ENCODE measurements at regions of chr20 and their contacts with region 1.

Region 1: GRCh38 chr20:44909872-44910689 is at the start of gene PABPC1L:
- DNase-seq: peak; percentile 79
- ATAC-seq: peak; percentile 84
- H3K4me3 ChIP-seq: peak within 1 kb of the TSS; percentile 79
- H3K27ac ChIP-seq: no peak within 1 kb of the TSS
- H3K4me1 ChIP-seq: peaks cover 6% of the 10 kb centered on the region; the same call in 1 of the 2 replicates
- H3K27me3 ChIP-seq: no peaks in the 10 kb centered on the region
- CTCF ChIP-seq: no peak
- total RNA-seq, gene PABPC1L: 32.0 and 40.7 TPM in 2 replicates

Region 2: DNA sequence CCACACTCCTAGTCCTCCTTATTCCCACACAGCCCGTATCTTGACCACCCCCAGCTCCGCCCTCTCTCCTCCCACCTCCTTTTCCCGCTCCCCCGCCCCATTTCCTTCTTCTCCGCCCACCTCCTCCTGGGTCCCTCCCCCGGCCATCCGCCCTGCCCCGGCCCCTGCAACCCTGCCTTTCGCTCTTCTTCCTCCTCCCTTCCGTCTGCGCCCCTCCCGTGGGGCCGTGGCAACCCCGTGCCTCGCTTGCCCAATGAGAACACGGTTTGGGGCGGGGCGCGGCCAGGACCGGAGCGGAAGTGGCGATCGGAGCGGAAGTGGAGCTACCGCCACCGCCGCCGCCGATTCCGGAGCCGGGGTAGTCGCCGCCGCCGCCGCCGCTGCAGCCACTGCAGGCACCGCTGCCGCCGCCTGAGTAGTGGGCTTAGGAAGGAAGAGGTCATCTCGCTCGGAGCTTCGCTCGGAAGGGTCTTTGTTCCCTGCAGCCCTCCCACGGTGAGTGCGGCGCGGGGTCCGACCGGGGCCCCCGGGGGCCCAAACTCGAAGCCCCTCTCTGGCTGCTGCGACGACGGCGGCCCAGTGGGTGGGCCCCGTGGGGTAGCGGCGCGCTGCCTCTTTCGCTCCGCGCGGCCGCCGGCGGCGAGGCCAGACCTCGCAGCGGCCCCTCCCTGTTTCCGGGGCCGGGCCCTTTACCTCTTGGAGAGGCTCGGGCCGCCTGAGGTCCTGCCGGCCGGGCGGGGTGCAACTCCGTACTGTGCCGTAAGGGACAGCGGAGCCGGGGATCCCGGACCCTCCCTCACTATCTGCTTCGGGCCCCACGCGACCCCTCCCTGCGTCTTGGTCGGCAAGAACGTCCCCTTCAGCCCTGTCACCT is 24.5 kb before region 1 on chr20 and contains the start of gene YWHAB:
- CTCF ChIA-PET with region 1: interaction called, 3 read pairs
- POLR2A ChIA-PET with region 1: interaction called, 5 read pairs
- intact Hi-C with region 1: loop called (anchors 1 kb)
- DNase-seq: peak; percentile 99
- ATAC-seq: peak; percentile 96
- H3K4me3 ChIP-seq: peak within 1 kb of the TSS; percentile 96
- H3K27ac ChIP-seq: peak within 1 kb of the TSS; percentile 77
- H3K4me1 ChIP-seq: peaks cover 33% of the 10 kb centered on the region
- H3K27me3 ChIP-seq: no peaks in the 10 kb centered on the region
- CTCF ChIP-seq: no peak
- total RNA-seq, gene YWHAB: 116 and 118 TPM in 2 replicates

Region 3: DNA sequence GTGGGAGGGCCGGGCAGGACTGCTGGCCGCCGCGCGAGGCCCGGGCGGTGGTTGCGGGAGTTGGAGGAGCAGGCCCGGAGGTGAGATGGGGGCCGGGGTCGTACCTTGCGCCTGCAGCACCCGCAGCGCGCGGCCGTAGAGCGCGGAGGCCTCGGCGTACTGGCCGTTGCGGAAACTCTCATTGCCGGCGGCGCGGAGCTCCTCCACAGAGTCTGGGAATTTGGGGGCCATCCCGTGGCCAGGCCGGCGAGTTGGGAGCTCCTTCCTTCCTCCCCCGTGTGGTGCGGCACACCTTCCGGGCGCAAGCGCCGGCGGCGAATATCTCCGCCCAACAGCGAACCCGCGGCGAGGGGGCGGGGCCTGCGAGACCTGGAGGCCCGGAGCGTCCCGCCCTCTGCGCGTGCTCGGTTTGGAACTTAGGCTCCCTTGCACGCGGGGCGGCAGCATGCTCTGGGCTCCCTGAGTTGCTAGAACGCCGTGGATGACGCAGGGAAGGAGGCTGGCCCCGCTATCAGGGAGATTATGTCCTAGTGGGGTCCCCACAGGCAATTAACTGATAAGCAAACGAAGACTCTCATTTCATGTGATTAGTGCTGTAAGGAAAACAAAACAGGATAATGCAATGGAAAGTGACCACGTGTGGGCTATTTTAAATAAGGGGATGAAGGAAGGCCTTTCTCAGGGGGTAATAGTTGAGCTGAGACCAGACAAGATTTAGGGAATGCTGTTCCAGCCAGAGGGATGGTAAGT is 50.2 kb after region 1 on chr20 and contains the start of gene TOMM34:
- CTCF ChIA-PET with region 1: interaction called, 4 read pairs
- POLR2A ChIA-PET with region 1: interaction called, 10 read pairs
- intact Hi-C with region 1: loop called (anchors 2 kb)
- DNase-seq: peak; percentile 97
- ATAC-seq: peak; percentile 83
- H3K4me3 ChIP-seq: peak within 1 kb of the TSS; percentile 79
- H3K27ac ChIP-seq: peak within 1 kb of the TSS; percentile 89
- H3K4me1 ChIP-seq: peaks cover 47% of the 10 kb centered on the region
- H3K27me3 ChIP-seq: no peaks in the 10 kb centered on the region
- CTCF ChIP-seq: no peak
- total RNA-seq, gene TOMM34: 103 and 120 TPM in 2 replicates

Measured in PC-3 (cell line).